Activated CD8-positive, alpha-beta T cell treated with anti-CD3 and anti-CD28 coated beads for 36 hours (primary cell): ENCODE measurements at regions of chr17 and their contacts with region 1.

Region 1: GRCh38 chr17:42039794-42040763 is 10.3 kb downstream of the C17orf113 start:
- DNase-seq: no peak
- ATAC-seq: no peak
- H3K4me3 Mint-ChIP-seq: no peak overlapping the region
- H3K27ac Mint-ChIP-seq: no peak overlapping the region
- H3K4me1 Mint-ChIP-seq: no peaks in the 10 kb centered on the region
- H3K27me3 Mint-ChIP-seq: peaks cover 3% of the 10 kb centered on the region
- CTCF ChIP-seq: no peak

Region 2: DNA sequence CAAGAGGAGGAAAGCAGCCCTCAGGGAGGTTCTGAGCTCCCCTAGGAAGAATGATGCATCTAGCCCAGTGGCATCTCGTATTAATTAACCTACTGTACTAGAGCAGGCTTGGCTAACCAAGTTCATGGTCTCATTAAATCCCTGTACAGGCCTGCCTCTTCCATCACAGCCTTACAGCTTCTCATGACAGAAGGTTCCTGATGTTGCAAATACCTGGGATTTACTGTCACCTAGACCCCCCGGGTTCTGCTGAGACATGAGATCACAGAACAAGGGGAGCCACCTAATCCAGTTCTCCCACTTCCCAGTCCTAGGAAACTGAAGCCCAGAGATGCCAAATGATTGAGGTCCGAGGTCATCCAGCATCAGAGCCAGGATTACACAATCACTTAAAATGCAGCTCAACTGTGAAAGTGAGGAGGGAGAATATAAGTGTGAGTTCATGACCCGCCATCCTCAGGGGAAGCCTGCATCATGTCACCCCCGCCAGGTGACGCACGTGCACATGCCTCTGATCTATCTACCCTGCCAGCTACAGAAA is 145.2 kb before region 1 on chr17:
- CTCF ChIA-PET with region 1: no interaction called
- POLR2A ChIA-PET with region 1: no interaction called
- intact Hi-C with region 1: no loop called
- DNase-seq: no peak
- ATAC-seq: no peak
- H3K4me3 Mint-ChIP-seq: no peak overlapping the region
- H3K27ac Mint-ChIP-seq: no peak overlapping the region
- H3K4me1 Mint-ChIP-seq: no peaks in the 10 kb centered on the region
- H3K27me3 Mint-ChIP-seq: no peaks in the 10 kb centered on the region
- CTCF ChIP-seq: no peak

Region 3: DNA sequence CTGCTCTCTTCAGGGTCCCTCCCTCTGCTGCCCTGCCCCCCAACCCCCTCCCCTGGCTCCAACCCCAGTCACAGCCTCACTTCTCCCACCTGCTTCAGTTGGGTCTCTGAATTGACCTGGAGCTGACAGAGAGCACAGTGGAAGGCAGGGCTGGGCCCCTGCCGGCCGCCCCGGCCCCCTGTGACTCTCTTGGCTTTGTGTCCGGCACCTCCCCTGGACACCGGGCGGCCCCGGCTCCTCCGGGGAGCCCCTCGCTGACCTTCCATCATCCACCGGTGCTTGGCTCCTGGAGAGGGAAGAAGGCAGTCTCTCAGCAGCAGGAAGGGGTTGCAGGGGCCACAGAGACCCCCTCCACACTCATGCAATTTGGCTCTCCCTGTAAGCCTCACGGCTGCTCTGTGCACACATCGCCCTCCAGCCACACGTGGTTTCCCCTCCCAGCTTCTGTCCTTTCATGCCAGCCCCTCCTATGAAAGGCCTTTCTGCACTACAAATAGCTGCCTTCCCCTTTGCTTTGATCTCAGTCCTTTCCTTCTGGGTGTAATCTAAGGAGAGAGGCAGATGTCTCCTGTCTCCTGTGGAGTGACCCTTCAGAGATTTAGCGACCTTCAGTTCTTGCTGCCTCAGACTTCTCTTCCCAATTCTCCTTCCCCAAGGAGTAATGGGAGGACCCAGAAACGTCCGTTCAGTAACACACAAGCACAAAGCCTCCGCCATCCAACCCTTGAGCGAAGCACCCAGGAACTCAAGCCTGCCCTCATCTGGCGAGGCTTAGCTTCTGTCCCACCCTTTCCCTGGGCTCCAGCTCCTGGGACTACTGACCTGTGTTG is 11.9 kb before region 1 on chr17:
- CTCF ChIA-PET with region 1: interaction called, 13 read pairs
- POLR2A ChIA-PET with region 1: interaction called, 3 read pairs
- intact Hi-C with region 1: no loop called
- DNase-seq: no peak
- ATAC-seq: no peak
- H3K4me3 Mint-ChIP-seq: no peak overlapping the region
- H3K27ac Mint-ChIP-seq: no peak overlapping the region
- H3K4me1 Mint-ChIP-seq: peaks cover 12% of the 10 kb centered on the region
- H3K27me3 Mint-ChIP-seq: peaks cover 5% of the 10 kb centered on the region
- CTCF ChIP-seq: no peak